Calu3 (cell line): ENCODE measurements at regions of chr6 and their contacts with region 1.

Region 1: DNA sequence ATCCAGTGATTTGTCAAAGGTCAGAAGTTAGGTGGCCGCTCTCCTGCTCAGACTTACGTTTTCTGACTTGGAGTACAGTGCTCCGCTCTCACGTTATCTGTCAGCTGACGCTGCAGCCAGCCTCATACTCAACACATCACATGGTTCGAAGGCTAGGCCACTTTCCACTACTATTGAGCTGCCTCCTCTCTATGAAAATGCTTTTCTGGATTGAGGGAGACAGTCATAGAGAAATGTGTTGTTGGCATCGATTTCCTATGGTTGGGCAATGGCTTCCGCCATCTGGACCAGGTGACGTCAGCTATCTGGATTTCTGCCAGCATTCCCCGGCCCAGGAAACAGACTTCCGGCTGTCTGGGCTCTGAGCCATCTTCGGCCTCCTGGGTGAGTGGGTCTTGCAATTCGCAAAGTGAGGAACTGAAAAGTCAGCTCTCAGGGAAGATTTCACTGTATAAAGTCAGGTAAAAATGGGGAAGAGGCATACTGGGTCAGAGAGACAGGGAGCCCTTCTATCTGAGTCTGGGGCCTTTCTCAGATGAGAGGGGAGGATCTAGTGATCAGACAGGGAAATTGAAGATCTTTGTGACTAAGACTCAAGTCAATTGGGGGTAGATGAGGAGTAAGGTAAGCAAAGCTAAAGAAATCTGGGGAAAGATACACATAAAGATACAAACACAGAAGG is 37.5 kb upstream of the IER3 start:
- DNase-seq: peak; percentile 100
- H3K4me3 Mint-ChIP-seq: peak overlapping the region; percentile 45
- H3K27ac Mint-ChIP-seq: peak overlapping the region; percentile 97
- H3K4me1 Mint-ChIP-seq: peaks cover 68% of the 10 kb centered on the region
- H3K27me3 Mint-ChIP-seq: no peaks in the 10 kb centered on the region
- CTCF ChIP-seq: no peak

Region 2: DNA sequence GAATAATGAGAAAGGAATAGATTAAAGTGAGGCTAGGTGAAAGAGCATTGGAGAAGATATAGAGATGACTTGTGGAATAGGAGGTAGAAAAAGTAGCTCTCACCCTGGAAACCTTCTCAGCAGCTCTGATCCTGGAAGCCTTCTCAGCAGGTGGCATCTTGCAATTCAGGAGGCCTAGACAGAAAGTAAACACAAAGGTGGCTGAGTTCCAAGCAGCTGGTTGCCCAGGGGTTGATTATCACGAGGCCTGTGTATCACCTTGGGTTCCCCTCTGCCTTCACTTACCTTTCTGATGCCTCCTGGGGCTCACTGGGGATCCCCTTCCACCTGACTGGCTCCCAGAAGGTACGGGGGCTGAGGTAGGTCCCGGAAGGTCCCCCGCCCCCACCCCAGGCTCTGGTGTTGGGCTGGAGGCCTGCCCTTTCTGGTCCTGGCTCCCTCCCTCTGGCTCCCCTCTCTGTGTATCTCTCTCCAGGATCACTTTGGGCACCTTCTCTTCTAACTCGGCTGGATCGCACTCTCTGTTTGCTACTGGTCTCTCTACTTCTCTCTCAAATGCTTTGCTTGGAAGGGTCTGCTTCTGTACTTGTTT is 74.5 kb before region 1 on chr6:
- CTCF ChIA-PET with region 1: no interaction called
- intact Hi-C with region 1: no loop called
- DNase-seq: peak; percentile 56
- H3K4me3 Mint-ChIP-seq: peak overlapping the region; percentile 3
- H3K27ac Mint-ChIP-seq: peak overlapping the region; percentile 4
- H3K4me1 Mint-ChIP-seq: peaks cover 44% of the 10 kb centered on the region
- H3K27me3 Mint-ChIP-seq: no peaks in the 10 kb centered on the region
- CTCF ChIP-seq: no peak

Region 3: DNA sequence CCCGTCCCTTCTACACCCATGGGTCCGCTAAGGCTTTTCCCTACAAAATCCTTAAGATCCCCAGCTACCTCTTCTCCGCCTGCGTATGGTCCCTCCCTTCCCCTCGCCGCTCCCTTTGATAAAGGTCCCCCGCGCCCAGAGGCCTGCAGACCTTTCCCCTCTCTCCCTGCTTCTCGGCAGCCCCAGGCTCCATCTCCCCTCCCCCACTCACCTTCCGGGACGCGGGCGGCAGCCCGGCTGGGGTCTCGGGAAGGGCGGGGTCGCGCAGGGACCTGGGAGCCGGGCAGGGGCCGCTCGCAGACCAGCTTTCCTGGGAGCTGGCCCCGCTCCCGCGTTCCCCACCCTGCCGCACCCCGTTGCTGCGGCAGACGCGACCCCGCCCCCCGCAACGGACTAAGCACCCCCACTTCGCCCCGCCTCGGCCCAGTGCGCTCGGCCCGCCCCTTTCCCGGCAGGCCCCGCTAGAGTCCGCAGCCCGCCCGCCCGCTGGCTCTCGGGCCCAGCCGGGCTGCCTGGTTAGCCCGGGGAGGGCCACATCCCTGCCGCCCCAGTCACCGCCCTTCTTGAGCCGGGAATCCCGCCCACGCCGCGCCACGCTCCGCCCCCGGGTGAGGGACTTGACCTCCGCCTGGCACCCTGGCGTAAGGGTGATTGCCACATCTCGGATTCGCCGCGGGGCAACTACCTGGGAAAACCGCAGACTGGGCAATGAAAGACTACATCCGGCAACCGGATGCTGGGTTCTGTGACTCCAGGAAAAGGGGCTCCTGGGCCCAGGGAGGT is 39.4 kb before region 1 on chr6 and contains the start of gene FLOT1:
- CTCF ChIA-PET with region 1: interaction called, 11 read pairs
- intact Hi-C with region 1: no loop called
- DNase-seq: peak; percentile 99
- H3K4me3 Mint-ChIP-seq: peak within 1 kb of the TSS; percentile 93
- H3K27ac Mint-ChIP-seq: peak within 1 kb of the TSS; percentile 98
- H3K4me1 Mint-ChIP-seq: peaks cover 60% of the 10 kb centered on the region
- H3K27me3 Mint-ChIP-seq: peaks cover 13% of the 10 kb centered on the region
- CTCF ChIP-seq: no peak
- total RNA-seq, gene FLOT1: 240 and 243 TPM in 2 replicates

Region 4: GRCh38 chr6:30763302-30764193 is 18.3 kb before region 1 on chr6:
- CTCF ChIA-PET with region 1: interaction called, 21 read pairs
- intact Hi-C with region 1: loop called (anchors 1 kb)
- DNase-seq: peak; percentile 77
- H3K4me3 Mint-ChIP-seq: peak overlapping the region; percentile 27
- H3K27ac Mint-ChIP-seq: peak overlapping the region; percentile 88
- H3K4me1 Mint-ChIP-seq: peaks cover 55% of the 10 kb centered on the region
- H3K27me3 Mint-ChIP-seq: no peaks in the 10 kb centered on the region
- CTCF ChIP-seq: no peak

Region 5: GRCh38 chr6:30814136-30815040 is 32.5 kb after region 1 on chr6:
- CTCF ChIA-PET with region 1: interaction called, 14 read pairs
- intact Hi-C with region 1: loop called (anchors 2 kb)
- DNase-seq: peak; percentile 77
- H3K4me3 Mint-ChIP-seq: peak overlapping the region; percentile 3
- H3K27ac Mint-ChIP-seq: peak overlapping the region; percentile 84
- H3K4me1 Mint-ChIP-seq: peaks cover 58% of the 10 kb centered on the region
- H3K27me3 Mint-ChIP-seq: no peaks in the 10 kb centered on the region
- CTCF ChIP-seq: no peak

Region 6: DNA sequence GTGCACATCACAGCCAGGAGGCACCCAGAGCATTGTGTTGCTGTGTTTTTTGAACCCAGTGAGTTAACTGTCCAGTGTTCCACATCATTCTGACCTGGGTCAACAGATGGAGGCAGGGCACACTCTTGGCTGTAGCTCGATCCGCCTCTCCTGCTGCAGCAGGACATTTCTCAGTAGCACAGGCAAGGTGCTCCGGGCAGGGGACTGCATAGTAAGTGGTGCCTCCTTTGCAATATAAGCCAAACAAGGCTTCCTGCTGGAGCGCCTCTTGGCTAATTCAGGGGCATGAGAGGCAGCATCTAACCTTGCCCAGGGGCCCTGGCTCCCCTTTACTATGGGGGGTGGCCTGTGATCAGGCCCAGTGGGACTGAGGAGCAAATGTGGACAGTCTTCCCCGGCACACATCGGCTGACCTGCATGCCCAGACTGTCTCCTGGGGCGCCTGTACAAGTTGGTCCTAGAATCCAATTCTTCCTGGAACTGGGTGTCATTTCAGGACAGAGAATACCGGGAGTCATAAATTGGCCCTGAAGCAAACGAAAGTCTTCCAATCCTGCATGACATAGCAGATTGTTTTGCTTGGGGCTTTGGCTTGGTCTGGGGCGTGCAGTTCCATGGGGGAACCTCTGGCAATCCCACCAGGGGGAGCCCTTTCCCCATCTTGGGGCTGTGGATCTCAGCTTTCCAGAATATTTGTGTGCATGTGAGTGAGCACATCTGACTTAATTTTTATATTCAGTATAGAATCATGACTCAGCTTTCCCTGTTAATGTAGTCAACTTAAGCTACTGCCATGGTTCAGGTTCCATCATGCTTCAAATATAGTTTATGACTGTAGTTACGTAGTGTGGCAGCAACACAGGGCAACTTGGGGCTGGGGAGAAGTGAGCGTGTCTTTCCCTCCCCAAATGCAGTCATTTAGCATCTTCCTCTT is 46.4 kb after region 1 on chr6:
- CTCF ChIA-PET with region 1: interaction called, 10 read pairs
- intact Hi-C with region 1: loop called (anchors 5 kb)
- DNase-seq: peak; percentile 99
- H3K4me3 Mint-ChIP-seq: no peak overlapping the region
- H3K27ac Mint-ChIP-seq: peak overlapping the region; percentile 12
- H3K4me1 Mint-ChIP-seq: peaks cover 37% of the 10 kb centered on the region
- H3K27me3 Mint-ChIP-seq: no peaks in the 10 kb centered on the region
- CTCF ChIP-seq: peak; percentile 95

Region 7: DNA sequence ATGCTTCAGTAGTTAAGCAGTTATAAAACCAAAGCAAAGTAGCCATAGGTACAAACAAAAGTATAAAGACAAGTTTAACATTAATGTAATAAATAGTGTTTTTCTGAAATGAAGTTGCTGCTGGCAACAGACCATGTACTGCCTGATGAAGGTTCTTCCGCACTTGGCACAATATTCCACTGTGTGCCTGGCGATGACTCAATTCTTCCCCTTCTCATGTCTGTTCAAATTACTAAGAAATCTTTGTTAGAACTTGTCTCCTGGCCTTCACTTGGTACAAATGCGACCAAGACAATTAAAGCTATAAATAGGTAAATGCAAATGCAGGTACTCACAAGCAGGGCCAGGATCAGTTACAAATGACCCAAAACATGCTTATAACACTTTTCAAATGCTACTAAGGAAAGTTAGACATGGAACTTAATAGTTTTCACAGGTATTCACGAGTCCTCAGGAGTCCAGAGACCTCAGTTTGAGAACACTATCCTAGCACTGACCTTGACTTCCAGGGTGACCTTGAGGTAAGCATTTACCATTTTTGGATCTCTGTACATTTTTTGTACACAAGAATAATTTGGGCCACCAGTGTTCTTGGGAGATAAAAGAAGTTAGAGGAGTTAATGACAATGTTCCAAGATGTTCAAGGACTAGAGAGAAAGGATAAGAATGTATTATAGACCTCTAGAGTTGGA is 94.3 kb after region 1 on chr6:
- CTCF ChIA-PET with region 1: no interaction called
- intact Hi-C with region 1: no loop called
- DNase-seq: peak; percentile 73
- H3K4me3 Mint-ChIP-seq: no peak overlapping the region
- H3K27ac Mint-ChIP-seq: peak overlapping the region; percentile 37
- H3K4me1 Mint-ChIP-seq: peaks cover 43% of the 10 kb centered on the region
- H3K27me3 Mint-ChIP-seq: peaks cover 6% of the 10 kb centered on the region
- CTCF ChIP-seq: no peak